ENCODE measurements at regions of chr16 and their contacts with region 1.

Region 1: GRCh38 chr16:31142109-31143010 is 6.8 kb upstream of the PRSS8 start:
- DNase-seq: peak; percentile 99
- H3K27ac ChIP-seq: peak overlapping the region; percentile 98
- CTCF ChIP-seq: peak; percentile 95

Region 2: GRCh38 chr16:30964574-30965226 is 177.7 kb before region 1 on chr16:
- CTCF ChIA-PET with region 1: no interaction called
- POLR2A ChIA-PET with region 1: no interaction called
- DNase-seq: no peak
- H3K27ac ChIP-seq: no peak overlapping the region
- CTCF ChIP-seq: no peak

Region 3: GRCh38 chr16:31117391-31118197 is 24.8 kb before region 1 on chr16 and contains the start of gene KAT8:
- CTCF ChIA-PET with region 1: interaction called, 7 read pairs
- POLR2A ChIA-PET with region 1: interaction called, 15 read pairs
- DNase-seq: peak; percentile 98
- H3K27ac ChIP-seq: peak within 1 kb of the TSS; percentile 92
- CTCF ChIP-seq: no peak

Region 4: GRCh38 chr16:31157136-31157535 is 14.8 kb after region 1 on chr16:
- CTCF ChIA-PET with region 1: interaction called, 10 read pairs
- POLR2A ChIA-PET with region 1: no interaction called
- DNase-seq: no peak
- H3K27ac ChIP-seq: no peak overlapping the region
- CTCF ChIP-seq: no peak